IMR-90 (cell line): ENCODE measurements at regions of chr9 and their contacts with region 1.

Region 1: DNA sequence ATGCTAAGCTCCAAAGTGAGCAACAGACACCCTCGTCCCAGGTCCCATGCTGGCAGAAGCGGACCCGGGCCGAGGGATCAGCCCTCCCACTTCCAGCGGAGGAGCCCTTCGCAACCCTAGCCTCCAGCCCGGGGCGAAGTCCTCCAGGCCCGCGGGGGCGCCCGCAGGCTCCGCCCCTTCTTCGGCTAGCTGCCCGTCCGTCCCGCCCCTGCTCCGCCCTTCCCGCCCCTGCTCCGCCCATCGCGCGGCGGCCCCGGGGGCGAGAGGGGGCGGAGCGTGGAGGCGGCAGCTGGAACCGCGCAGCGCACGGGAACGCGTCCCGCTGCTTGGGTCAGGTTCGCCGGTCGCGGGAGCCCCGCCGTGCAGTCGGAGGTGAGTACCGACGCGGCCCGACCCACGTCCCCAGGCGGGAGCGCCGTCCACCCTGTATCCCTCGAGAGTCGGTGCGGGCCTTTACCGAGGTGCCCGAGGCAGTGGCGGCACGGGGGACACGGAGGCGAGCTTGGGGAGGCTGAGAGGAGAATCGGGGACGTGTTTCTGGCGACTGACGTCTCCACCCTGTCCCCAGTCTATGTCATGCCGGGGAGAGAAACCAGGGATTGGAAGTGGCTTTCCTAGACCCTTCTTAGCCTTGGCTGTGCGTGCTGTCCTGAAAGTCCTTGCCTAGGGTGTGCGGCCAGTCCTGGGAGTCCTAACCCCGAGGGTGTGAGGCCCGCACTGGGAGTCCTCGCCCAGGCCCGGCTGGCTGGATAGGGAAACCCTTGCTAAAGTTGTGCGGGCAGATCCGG is at the start of gene ACO1:
- DNase-seq: peak; percentile 82
- ATAC-seq: peak; percentile 96
- H3K4me3 ChIP-seq: peak within 1 kb of the TSS; percentile 99
- H3K27ac ChIP-seq: peak within 1 kb of the TSS; percentile 97
- H3K4me1 ChIP-seq: peaks cover 19% of the 10 kb centered on the region
- H3K27me3 ChIP-seq: no peaks in the 10 kb centered on the region
- CTCF ChIP-seq: no peak
- POLR2A ChIP-seq: no peak; the same call in 1 of the 2 replicates
- RAD21 ChIP-seq: no peak
- total RNA-seq, gene ACO1: 140 and 158 TPM in 2 replicates

Region 2: DNA sequence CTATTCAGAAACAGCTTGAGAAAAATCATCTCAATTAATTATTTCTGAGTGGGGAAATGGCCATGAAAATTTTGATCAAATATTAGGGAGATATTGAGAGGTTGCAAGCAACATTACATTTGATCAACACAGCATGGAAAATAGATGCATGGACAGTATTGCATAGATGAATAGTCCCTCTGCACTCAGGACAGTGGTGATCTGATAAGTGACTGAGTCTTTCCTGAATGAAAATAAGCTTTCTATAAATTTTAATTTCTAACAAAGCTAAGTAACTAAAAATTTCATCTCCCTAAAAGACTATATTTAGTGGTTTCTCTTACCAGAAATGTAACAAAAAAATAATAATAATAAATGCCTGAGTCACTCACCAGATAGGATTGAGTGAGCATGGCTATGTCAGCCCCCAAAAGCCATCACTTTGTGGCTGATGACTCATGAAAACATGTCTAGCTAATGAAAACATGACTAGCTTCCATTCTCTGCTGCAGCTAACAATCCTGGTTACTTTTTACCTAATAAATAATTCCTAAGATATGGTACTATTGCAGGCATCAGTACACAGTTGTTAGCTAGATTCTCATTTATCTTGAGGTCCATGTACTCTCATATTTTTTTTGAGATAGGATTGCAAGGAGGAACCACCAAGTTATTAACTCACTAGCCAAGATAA is 1294.9 kb before region 1 on chr9:
- CTCF ChIA-PET with region 1: no interaction called
- POLR2A ChIA-PET with region 1: no interaction called
- dilution Hi-C with region 1: no loop called
- in situ Hi-C with region 1: no loop called
- intact Hi-C with region 1: no loop called
- DNase-seq: peak; percentile 0
- ATAC-seq: no peak
- H3K4me3 ChIP-seq: no peak overlapping the region
- H3K27ac ChIP-seq: no peak overlapping the region
- H3K4me1 ChIP-seq: no peaks in the 10 kb centered on the region
- H3K27me3 ChIP-seq: no peaks in the 10 kb centered on the region
- CTCF ChIP-seq: no peak
- POLR2A ChIP-seq: no peak
- RAD21 ChIP-seq: no peak

Region 3: GRCh38 chr9:32326146-32326545 is 58.4 kb before region 1 on chr9:
- CTCF ChIA-PET with region 1: no interaction called
- POLR2A ChIA-PET with region 1: no interaction called
- dilution Hi-C with region 1: no loop called
- in situ Hi-C with region 1: no loop called
- intact Hi-C with region 1: no loop called
- DNase-seq: no peak
- ATAC-seq: no peak
- H3K4me3 ChIP-seq: no peak overlapping the region
- H3K27ac ChIP-seq: no peak overlapping the region
- H3K4me1 ChIP-seq: no peaks in the 10 kb centered on the region
- H3K27me3 ChIP-seq: no peaks in the 10 kb centered on the region
- CTCF ChIP-seq: no peak
- POLR2A ChIP-seq: no peak
- RAD21 ChIP-seq: no peak

Region 4: DNA sequence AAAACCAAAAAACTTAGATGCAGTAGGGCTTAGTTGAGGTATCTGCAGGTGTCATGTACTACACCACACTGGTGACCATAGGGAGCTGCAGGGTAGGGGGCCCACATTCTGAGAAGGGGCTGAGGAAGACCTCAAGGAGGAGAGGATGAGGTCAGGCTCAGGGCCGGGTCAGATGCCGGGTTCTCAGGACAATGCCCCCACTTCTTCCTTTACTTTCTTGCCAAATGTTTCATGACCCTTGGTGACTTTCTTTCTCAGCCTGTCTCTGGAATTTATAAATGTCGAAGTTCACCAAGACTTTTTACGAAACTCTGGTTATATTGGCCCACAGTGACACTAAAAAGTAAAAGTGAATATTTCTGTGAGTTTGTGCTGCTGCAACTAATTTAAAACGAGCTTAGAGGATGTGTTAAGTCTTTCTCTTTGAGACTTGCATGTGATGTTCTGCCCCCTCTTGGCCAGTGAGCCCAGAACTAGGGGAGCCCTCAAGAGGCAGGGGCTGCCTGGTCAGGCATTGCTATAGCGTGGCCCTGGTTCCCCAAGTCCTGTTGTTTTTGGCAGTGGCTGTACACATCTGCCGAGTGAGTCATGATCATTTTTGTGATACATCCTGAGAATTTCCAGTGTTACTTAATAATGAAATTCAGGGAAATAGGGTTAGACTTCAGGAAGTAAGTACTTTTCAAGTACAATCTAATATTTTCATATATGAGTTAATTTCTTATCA is 11.1 kb after region 1 on chr9:
- CTCF ChIA-PET with region 1: interaction called, 3 read pairs
- POLR2A ChIA-PET with region 1: interaction called, 3 read pairs
- dilution Hi-C with region 1: no loop called
- in situ Hi-C with region 1: no loop called
- intact Hi-C with region 1: loop called (anchors 1 kb)
- DNase-seq: peak; percentile 98
- ATAC-seq: peak; percentile 87
- H3K4me3 ChIP-seq: no peak overlapping the region
- H3K27ac ChIP-seq: peak overlapping the region; percentile 100
- H3K4me1 ChIP-seq: peaks cover 36% of the 10 kb centered on the region
- H3K27me3 ChIP-seq: no peaks in the 10 kb centered on the region
- CTCF ChIP-seq: peak; percentile 47
- POLR2A ChIP-seq: no peak
- RAD21 ChIP-seq: peak; percentile 40

Region 5: GRCh38 chr9:32413424-32413823 is 28.9 kb after region 1 on chr9:
- CTCF ChIA-PET with region 1: interaction called, 3 read pairs
- POLR2A ChIA-PET with region 1: interaction called, 15 read pairs
- dilution Hi-C with region 1: no loop called
- in situ Hi-C with region 1: no loop called
- intact Hi-C with region 1: no loop called
- DNase-seq: no peak
- ATAC-seq: peak; percentile 27
- H3K4me3 ChIP-seq: no peak overlapping the region
- H3K27ac ChIP-seq: peak overlapping the region; percentile 53; the same call in 1 of the 2 replicates
- H3K4me1 ChIP-seq: no peaks in the 10 kb centered on the region; the same call in 1 of the 2 replicates
- H3K27me3 ChIP-seq: no peaks in the 10 kb centered on the region
- CTCF ChIP-seq: no peak
- POLR2A ChIP-seq: no peak
- RAD21 ChIP-seq: no peak

Region 6: GRCh38 chr9:32426278-32426939 is 41.9 kb after region 1 on chr9:
- CTCF ChIA-PET with region 1: interaction called, 18 read pairs
- POLR2A ChIA-PET with region 1: no interaction called
- dilution Hi-C with region 1: no loop called
- in situ Hi-C with region 1: no loop called
- intact Hi-C with region 1: loop called (anchors 2 kb)
- DNase-seq: peak; percentile 99
- ATAC-seq: peak; percentile 76
- H3K4me3 ChIP-seq: no peak overlapping the region
- H3K27ac ChIP-seq: peak overlapping the region; percentile 96
- H3K4me1 ChIP-seq: peaks cover 42% of the 10 kb centered on the region
- H3K27me3 ChIP-seq: no peaks in the 10 kb centered on the region
- CTCF ChIP-seq: no peak
- POLR2A ChIP-seq: peak; percentile 28; the same call in 1 of the 2 replicates
- RAD21 ChIP-seq: no peak

Region 7: GRCh38 chr9:32526041-32526706 is 141.6 kb after region 1 on chr9 and contains the start of gene RIGI:
- CTCF ChIA-PET with region 1: no interaction called
- POLR2A ChIA-PET with region 1: no interaction called
- dilution Hi-C with region 1: no loop called
- in situ Hi-C with region 1: no loop called
- intact Hi-C with region 1: loop called (anchors 1 kb)
- DNase-seq: peak; percentile 93
- ATAC-seq: peak; percentile 95
- H3K4me3 ChIP-seq: peak within 1 kb of the TSS; percentile 86
- H3K27ac ChIP-seq: peak within 1 kb of the TSS; percentile 91
- H3K4me1 ChIP-seq: peaks cover 3% of the 10 kb centered on the region
- H3K27me3 ChIP-seq: no peaks in the 10 kb centered on the region
- CTCF ChIP-seq: peak; percentile 32; the same call in 1 of the 2 replicates
- POLR2A ChIP-seq: peak; percentile 78
- RAD21 ChIP-seq: peak; percentile 34; the same call in 1 of the 2 replicates
- total RNA-seq, gene RIGI: 13.6 and 18.1 TPM in 2 replicates

Region 8: GRCh38 chr9:32571969-32572899 is 187.7 kb after region 1 on chr9:
- CTCF ChIA-PET with region 1: interaction called, 189 read pairs
- POLR2A ChIA-PET with region 1: interaction called, 4 read pairs
- dilution Hi-C with region 1: no loop called
- in situ Hi-C with region 1: loop called (anchors 5 kb)
- intact Hi-C with region 1: loop called (anchors 1 kb)
- DNase-seq: peak; percentile 82
- ATAC-seq: peak; percentile 81
- H3K4me3 ChIP-seq: peak overlapping the region; percentile 79
- H3K27ac ChIP-seq: peak overlapping the region; percentile 78
- H3K4me1 ChIP-seq: no peaks in the 10 kb centered on the region
- H3K27me3 ChIP-seq: no peaks in the 10 kb centered on the region
- CTCF ChIP-seq: peak; percentile 77
- POLR2A ChIP-seq: no peak
- RAD21 ChIP-seq: peak; percentile 74

Region 9: GRCh38 chr9:32579706-32580331 is 195.3 kb after region 1 on chr9:
- CTCF ChIA-PET with region 1: interaction called, 189 read pairs
- POLR2A ChIA-PET with region 1: no interaction called
- dilution Hi-C with region 1: no loop called
- in situ Hi-C with region 1: loop called (anchors 5 kb)
- intact Hi-C with region 1: loop called (anchors 1 kb)
- DNase-seq: peak; percentile 53
- ATAC-seq: peak; percentile 65; the same call in 1 of the 2 replicates
- H3K4me3 ChIP-seq: no peak overlapping the region
- H3K27ac ChIP-seq: no peak overlapping the region
- H3K4me1 ChIP-seq: 0 out of 2 replicates have a peak, but pooled peaks cover 3% of the 10 kb centered on the region
- H3K27me3 ChIP-seq: peaks cover 2% of the 10 kb centered on the region; the same call in 1 of the 2 replicates
- CTCF ChIP-seq: peak; percentile 89
- POLR2A ChIP-seq: no peak
- RAD21 ChIP-seq: peak; percentile 82

Region 10: DNA sequence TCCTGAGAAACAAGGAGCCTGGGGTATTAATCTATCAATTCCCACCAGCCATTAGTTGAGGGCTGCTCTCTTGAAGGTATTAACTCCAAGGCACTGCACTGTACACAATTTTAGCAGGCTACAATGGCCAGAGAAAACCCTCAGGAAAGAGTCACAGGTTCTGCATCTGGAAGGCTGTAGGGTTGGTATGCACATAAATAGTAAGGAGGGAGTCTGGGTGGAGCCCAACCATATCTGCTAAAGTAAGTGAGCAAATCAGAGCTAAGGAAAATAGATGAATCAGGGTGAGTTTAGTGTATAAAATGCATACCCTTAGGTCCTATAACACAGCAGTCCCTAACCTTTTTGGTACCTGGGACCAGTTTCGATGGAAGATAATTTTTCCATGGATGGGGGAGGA is 417.0 kb after region 1 on chr9:
- CTCF ChIA-PET with region 1: no interaction called
- POLR2A ChIA-PET with region 1: no interaction called
- dilution Hi-C with region 1: no loop called
- in situ Hi-C with region 1: no loop called
- intact Hi-C with region 1: no loop called
- DNase-seq: no peak
- ATAC-seq: no peak
- H3K4me3 ChIP-seq: no peak overlapping the region
- H3K27ac ChIP-seq: no peak overlapping the region
- H3K4me1 ChIP-seq: no peaks in the 10 kb centered on the region
- H3K27me3 ChIP-seq: no peaks in the 10 kb centered on the region
- CTCF ChIP-seq: no peak
- POLR2A ChIP-seq: no peak
- RAD21 ChIP-seq: no peak